ENCODE measurements at regions of chrX and their contacts with region 1.

Region 1: GRCh38 chrX:111652719-111653118 is 28.3 kb upstream of the ALG13 start:
- DNase-seq: no peak
- ATAC-seq: no peak
- H3K4me3 ChIP-seq: no peak overlapping the region
- H3K4me1 ChIP-seq: no peaks in the 10 kb centered on the region
- CTCF ChIP-seq: no peak

Region 2: GRCh38 chrX:111511477-111511876 is 141.2 kb before region 1 on chrX and contains the start of gene SERTM2:
- intact Hi-C with region 1: no loop called
- DNase-seq: no peak
- ATAC-seq: no peak
- H3K4me3 ChIP-seq: no peak within 1 kb of the TSS
- H3K4me1 ChIP-seq: no peaks in the 10 kb centered on the region
- CTCF ChIP-seq: no peak
- total RNA-seq, gene SERTM2: 0.07 to 0.66 TPM in 2 of 3 donors, not detected in the other

Region 3: GRCh38 chrX:111624169-111624568 is 28.6 kb before region 1 on chrX:
- intact Hi-C with region 1: loop called in 1 of 2 experiments (anchors 5 kb)
- DNase-seq: peak in 1 of 3 donors; percentile 46
- ATAC-seq: no peak
- H3K4me3 ChIP-seq: no peak overlapping the region
- H3K4me1 ChIP-seq: no peaks in the 10 kb centered on the region
- CTCF ChIP-seq: no peak